ENCODE measurements at regions of chr4 and their contacts with region 1.

Region 1: DNA sequence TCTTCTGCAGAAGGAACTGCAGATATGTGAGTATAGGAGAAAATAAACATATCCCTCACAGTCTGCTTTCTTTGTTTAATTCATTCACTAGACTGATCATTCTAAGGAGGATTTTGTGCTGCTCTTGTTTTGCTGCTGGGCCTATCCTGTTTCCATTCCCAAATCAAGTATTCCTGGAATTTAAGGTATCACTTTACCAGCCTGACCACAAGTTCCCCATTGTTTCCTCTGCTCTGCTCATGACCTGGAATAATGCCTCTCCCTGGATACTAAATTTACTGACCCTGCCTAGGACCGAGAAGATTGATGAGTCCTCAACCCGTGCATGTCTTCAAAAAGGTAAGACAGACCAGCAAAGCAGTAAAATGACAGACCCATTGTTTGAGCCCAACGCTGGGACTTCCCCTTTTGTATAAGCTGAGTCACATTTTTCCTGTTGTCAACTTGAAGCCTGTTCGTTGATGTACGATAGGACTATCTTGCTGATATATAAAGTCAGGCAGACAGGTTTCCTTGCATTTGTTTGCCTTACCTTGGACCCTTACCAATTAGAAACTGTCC is 85.5 kb upstream of the TET2 start:
- DNase-seq: peak; percentile 67
- H3K4me3 Mint-ChIP-seq: peak overlapping the region; percentile 30
- H3K27ac Mint-ChIP-seq: peak overlapping the region; percentile 82
- H3K4me1 Mint-ChIP-seq: peaks cover 54% of the 10 kb centered on the region
- H3K27me3 Mint-ChIP-seq: peaks cover 2% of the 10 kb centered on the region

Region 2: GRCh38 chr4:104490770-104491480 is 570.3 kb before region 1 on chr4:
- CTCF ChIA-PET with region 1: no interaction called
- POLR2A ChIA-PET with region 1: no interaction called
- intact Hi-C with region 1: loop called (anchors 5 kb)
- DNase-seq: peak; percentile 51
- H3K4me3 Mint-ChIP-seq: peak overlapping the region; percentile 67
- H3K27ac Mint-ChIP-seq: no peak overlapping the region
- H3K4me1 Mint-ChIP-seq: peaks cover 41% of the 10 kb centered on the region
- H3K27me3 Mint-ChIP-seq: peaks cover 52% of the 10 kb centered on the region

Region 3: GRCh38 chr4:104938624-104939023 is 122.6 kb before region 1 on chr4:
- CTCF ChIA-PET with region 1: no interaction called
- POLR2A ChIA-PET with region 1: no interaction called
- intact Hi-C with region 1: loop called (anchors 2 kb)
- DNase-seq: peak; percentile 31
- H3K4me3 Mint-ChIP-seq: no peak overlapping the region
- H3K27ac Mint-ChIP-seq: no peak overlapping the region
- H3K4me1 Mint-ChIP-seq: peaks cover 19% of the 10 kb centered on the region
- H3K27me3 Mint-ChIP-seq: no peaks in the 10 kb centered on the region

Region 4: GRCh38 chr4:104989371-104989770 is 71.8 kb before region 1 on chr4:
- CTCF ChIA-PET with region 1: no interaction called
- POLR2A ChIA-PET with region 1: no interaction called
- intact Hi-C with region 1: no loop called
- DNase-seq: no peak
- H3K4me3 Mint-ChIP-seq: no peak overlapping the region
- H3K27ac Mint-ChIP-seq: no peak overlapping the region
- H3K4me1 Mint-ChIP-seq: no peaks in the 10 kb centered on the region
- H3K27me3 Mint-ChIP-seq: no peaks in the 10 kb centered on the region

Region 5: GRCh38 chr4:105135785-105136184 is 74.6 kb after region 1 on chr4:
- CTCF ChIA-PET with region 1: interaction called, 7 read pairs
- POLR2A ChIA-PET with region 1: interaction called, 7 read pairs
- intact Hi-C with region 1: loop called (anchors 1 kb)
- DNase-seq: no peak
- H3K4me3 Mint-ChIP-seq: no peak overlapping the region
- H3K27ac Mint-ChIP-seq: no peak overlapping the region
- H3K4me1 Mint-ChIP-seq: peaks cover 28% of the 10 kb centered on the region
- H3K27me3 Mint-ChIP-seq: no peaks in the 10 kb centered on the region

Region 6: GRCh38 chr4:105215609-105216313 is 154.5 kb after region 1 on chr4:
- CTCF ChIA-PET with region 1: interaction called, 3 read pairs
- POLR2A ChIA-PET with region 1: no interaction called
- intact Hi-C with region 1: loop called (anchors 1 kb)
- DNase-seq: no peak
- H3K4me3 Mint-ChIP-seq: peak overlapping the region; percentile 14
- H3K27ac Mint-ChIP-seq: peak overlapping the region; percentile 65
- H3K4me1 Mint-ChIP-seq: peaks cover 42% of the 10 kb centered on the region
- H3K27me3 Mint-ChIP-seq: no peaks in the 10 kb centered on the region

Region 7: DNA sequence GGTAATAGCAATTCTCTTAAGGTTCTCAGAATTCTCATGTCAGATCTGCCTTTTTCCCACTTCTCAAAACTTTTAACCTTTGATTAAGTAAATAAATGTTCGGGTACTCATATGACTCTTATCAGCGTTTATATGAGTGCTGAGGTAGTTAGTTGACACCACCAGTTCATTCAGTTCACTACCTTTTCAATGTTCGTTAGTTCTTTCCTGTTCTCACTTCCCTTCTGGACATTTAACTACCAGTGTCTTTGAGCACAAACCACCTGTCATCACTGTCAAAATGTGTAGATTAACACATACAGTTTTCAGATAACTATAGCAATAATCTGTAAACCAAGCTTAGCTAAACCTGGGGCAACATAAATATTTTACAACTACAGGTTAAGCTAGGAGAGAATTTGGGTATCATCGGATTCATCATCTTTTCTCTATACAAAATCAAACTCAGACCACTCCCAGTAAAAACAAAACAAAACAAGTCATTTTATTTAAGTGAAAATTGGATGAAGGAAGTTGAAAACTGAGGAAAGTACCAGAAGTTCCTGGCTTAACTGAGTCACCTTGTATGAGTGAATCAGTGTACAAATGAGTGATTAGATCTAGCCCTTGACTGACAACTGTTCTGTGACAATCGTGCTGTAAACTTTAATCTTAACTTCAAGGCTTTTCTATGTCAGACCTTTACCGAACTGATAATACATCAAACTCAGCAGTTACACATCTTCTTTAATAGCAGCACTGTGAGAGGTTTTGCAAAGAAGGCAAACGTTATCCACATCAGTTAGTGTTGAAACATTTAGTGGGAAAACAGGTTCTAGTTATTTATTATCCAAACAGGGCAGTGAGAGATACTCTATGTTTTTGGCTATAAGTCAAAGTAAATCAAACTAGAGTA is 533.1 kb after region 1 on chr4:
- CTCF ChIA-PET with region 1: no interaction called
- POLR2A ChIA-PET with region 1: no interaction called
- intact Hi-C with region 1: loop called (anchors 1 kb)
- DNase-seq: no peak
- H3K4me3 Mint-ChIP-seq: no peak overlapping the region
- H3K27ac Mint-ChIP-seq: no peak overlapping the region
- H3K4me1 Mint-ChIP-seq: peaks cover 7% of the 10 kb centered on the region
- H3K27me3 Mint-ChIP-seq: peaks cover 21% of the 10 kb centered on the region